Naive thymus-derived CD8-positive, alpha-beta T cell (primary cell): ENCODE measurements at regions of chrX and their contacts with region 1.

Region 1: DNA sequence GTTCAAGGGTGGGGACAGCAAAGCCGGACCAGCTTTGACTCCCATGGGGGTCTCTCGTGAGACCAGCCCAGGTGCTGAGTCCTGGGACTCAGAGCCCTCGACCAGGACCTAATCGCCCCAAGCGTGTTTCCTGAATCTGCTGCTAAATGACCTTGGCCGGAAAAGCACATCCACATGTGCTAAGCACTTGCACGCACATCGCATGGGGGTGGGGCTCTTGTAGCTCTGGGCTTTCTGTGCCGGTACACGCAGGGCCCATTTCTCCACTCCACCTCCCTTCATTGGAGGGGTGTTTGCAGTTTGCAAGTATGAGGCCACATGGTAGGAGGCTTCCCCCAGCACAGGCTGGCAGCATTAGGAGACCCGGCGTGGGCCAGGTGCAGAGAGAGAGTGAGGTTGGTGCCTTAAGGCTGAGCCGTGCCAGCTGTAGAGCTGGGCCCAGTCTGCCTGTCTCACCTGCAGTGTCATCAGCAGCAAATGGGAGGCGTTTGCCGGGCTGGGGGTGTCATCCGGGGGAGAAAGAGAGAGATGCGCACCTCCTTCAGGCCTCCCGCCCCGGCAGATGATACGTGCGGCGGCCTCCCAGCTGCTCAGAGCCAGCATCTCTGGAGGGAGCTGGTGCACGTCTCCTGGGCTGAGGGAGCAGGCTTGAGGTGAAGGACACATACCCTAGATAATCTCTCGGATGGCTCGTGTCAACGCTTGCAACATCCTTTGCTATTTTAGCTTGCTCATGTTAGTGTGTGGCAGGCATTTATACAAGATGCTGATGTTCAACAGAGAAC is 45.2 kb upstream of the CLCN4 start:
- DNase-seq: peak; percentile 40 to 85 (median 61)
- ATAC-seq: peak; percentile 66 to 79
- H3K4me3 Mint-ChIP-seq: peak overlapping the region; percentile 74 to 91 (median 88)
- H3K27ac Mint-ChIP-seq: peak overlapping the region; percentile 93 to 100 (median 100)
- H3K4me1 Mint-ChIP-seq: peaks cover 12 to 78% (median 57%) of the 10 kb centered on the region in 4 donors
- H3K27me3 Mint-ChIP-seq: no peaks in the 10 kb centered on the region

Region 2: GRCh38 chrX:10014462-10015356 is 96.8 kb before region 1 on chrX:
- POLR2A ChIA-PET with region 1: interaction called, 18 read pairs
- DNase-seq: peak; percentile 58 to 81 (median 75)
- ATAC-seq: peak; percentile 86 to 92
- H3K4me3 Mint-ChIP-seq: peak overlapping the region; percentile 42 to 89 (median 72)
- H3K27ac Mint-ChIP-seq: peak overlapping the region in 3 of 10 donors; percentile 44 to 86 (median 67)
- H3K4me1 Mint-ChIP-seq: peaks cover 3 to 50% (median 28%) of the 10 kb centered on the region in 4 donors
- H3K27me3 Mint-ChIP-seq: no peaks in the 10 kb centered on the region

Region 3: DNA sequence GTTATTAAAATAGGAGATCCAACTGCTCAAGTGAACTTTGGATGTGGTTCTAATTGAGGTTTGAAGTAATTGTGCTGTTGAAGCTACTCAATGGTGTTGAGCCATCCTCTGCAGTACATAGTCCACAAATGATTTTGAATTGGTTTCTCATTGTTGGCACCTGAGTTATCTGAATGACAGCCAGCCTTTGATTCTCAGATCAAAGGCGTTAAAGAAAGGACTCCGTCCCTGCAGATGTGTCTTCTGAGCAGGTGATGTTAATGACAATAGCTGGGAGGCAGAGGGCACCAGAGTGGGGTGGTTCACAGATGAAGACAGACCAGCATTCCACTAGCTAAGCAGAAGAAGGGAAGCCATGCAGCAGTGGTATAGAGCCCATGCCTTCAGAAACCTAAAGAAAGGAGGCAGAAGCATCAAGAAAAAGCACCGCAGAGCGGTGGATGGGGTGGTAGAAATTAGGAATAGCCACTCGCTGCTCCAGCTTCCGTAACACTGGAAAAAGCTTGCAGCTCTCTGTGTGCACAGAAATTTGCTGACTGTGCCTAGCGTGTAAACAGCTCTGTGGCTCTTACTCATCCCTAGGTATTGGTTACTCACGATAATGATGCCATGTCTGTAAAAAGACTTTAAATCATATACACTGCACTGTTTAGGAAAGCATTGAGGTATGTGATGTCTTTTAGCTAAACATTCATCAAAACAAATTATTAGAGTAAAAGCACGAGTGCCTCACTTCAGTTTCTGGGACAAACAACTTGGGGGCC is 33.9 kb before region 1 on chrX:
- POLR2A ChIA-PET with region 1: interaction called, 12 read pairs
- DNase-seq: peak in 2 of 10 donors; percentile 11 to 46
- ATAC-seq: peak; percentile 50 to 84
- H3K4me3 Mint-ChIP-seq: no peak overlapping the region
- H3K27ac Mint-ChIP-seq: peak overlapping the region in 3 of 10 donors; percentile 9 to 36 (median 26)
- H3K4me1 Mint-ChIP-seq: peaks cover 5 to 12% (median 6%) of the 10 kb centered on the region in 4 donors
- H3K27me3 Mint-ChIP-seq: no peaks in the 10 kb centered on the region

Region 4: GRCh38 chrX:10086676-10087075 is 24.9 kb before region 1 on chrX:
- POLR2A ChIA-PET with region 1: interaction called, 16 read pairs
- DNase-seq: no peak
- ATAC-seq: no peak
- H3K4me3 Mint-ChIP-seq: peak overlapping the region in 1 of 10 donors; percentile 11
- H3K27ac Mint-ChIP-seq: peak overlapping the region in 3 of 10 donors; percentile 77 to 86 (median 80)
- H3K4me1 Mint-ChIP-seq: peaks cover 7 to 60% (median 24%) of the 10 kb centered on the region in 4 donors
- H3K27me3 Mint-ChIP-seq: no peaks in the 10 kb centered on the region

Region 5: DNA sequence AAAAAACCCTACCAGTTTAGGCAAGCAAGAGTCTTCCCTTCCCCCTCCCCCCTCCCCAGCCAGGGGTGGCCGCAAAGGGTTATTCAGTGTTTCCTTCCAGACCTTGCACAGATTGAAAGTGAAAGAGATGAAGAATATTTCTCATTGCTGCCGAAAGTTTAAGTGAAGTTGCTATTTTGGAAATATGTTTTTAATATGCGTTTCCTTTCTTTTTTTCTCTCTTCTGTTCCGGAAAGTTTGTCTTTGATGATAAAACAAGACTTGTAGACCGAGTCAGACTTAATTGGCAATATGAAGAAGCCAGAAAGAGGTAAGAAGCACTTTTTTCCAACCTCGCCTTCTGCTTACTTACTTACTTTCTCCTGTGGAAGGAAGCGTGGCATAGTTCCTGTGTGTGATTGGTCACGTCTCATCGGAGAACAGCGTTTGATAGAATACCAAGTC is 13.3 kb before region 1 on chrX:
- POLR2A ChIA-PET with region 1: interaction called, 88 read pairs
- DNase-seq: peak; percentile 21 to 77 (median 38)
- ATAC-seq: peak; percentile 76 to 86
- H3K4me3 Mint-ChIP-seq: peak overlapping the region; percentile 87 to 95 (median 90)
- H3K27ac Mint-ChIP-seq: peak overlapping the region; percentile 79 to 97 (median 92)
- H3K4me1 Mint-ChIP-seq: peaks cover 20 to 63% (median 57%) of the 10 kb centered on the region in 4 donors
- H3K27me3 Mint-ChIP-seq: no peaks in the 10 kb centered on the region

Region 6: GRCh38 chrX:10133980-10134676 is 22.6 kb after region 1 on chrX:
- POLR2A ChIA-PET with region 1: no interaction called
- DNase-seq: no peak
- ATAC-seq: no peak
- H3K4me3 Mint-ChIP-seq: no peak overlapping the region
- H3K27ac Mint-ChIP-seq: no peak overlapping the region
- H3K4me1 Mint-ChIP-seq: no peaks in the 10 kb centered on the region
- H3K27me3 Mint-ChIP-seq: no peaks in the 10 kb centered on the region